Activated T-helper 1 cell treated with anti-CD3 and anti-CD28 coated beads, Interleukin-12 subunit alpha, Interleukin-12 subunit beta, Interleukin-2, Interleukin-4 antibody, amounts not matched to agents 30 ng/mL and 10 ng/mL and 1 ng/mL, durations not matched to agents 14 hours and 24 hours and 36 hours (primary cell): ENCODE measurements at regions of chr1 and their contacts with region 1.

Region 1: GRCh38 chr1:225999227-225999911 is at the start of gene SDE2:
- DNase-seq: peak; percentile 99
- H3K4me3 Mint-ChIP-seq: peak within 1 kb of the TSS; percentile 100
- H3K27ac Mint-ChIP-seq: peak within 1 kb of the TSS; percentile 100
- H3K4me1 Mint-ChIP-seq: peaks cover 76% of the 10 kb centered on the region
- H3K27me3 Mint-ChIP-seq: no peaks in the 10 kb centered on the region
- total RNA-seq, gene SDE2: 28.2 and 28.4 TPM in 2 replicates

Region 2: GRCh38 chr1:225428068-225428880 is 571.1 kb before region 1 on chr1:
- intact Hi-C with region 1: loop called (anchors 1 kb)
- DNase-seq: peak; percentile 94
- H3K4me3 Mint-ChIP-seq: peak overlapping the region; percentile 83
- H3K27ac Mint-ChIP-seq: peak overlapping the region; percentile 90
- H3K4me1 Mint-ChIP-seq: peaks cover 56% of the 10 kb centered on the region
- H3K27me3 Mint-ChIP-seq: no peaks in the 10 kb centered on the region

Region 3: DNA sequence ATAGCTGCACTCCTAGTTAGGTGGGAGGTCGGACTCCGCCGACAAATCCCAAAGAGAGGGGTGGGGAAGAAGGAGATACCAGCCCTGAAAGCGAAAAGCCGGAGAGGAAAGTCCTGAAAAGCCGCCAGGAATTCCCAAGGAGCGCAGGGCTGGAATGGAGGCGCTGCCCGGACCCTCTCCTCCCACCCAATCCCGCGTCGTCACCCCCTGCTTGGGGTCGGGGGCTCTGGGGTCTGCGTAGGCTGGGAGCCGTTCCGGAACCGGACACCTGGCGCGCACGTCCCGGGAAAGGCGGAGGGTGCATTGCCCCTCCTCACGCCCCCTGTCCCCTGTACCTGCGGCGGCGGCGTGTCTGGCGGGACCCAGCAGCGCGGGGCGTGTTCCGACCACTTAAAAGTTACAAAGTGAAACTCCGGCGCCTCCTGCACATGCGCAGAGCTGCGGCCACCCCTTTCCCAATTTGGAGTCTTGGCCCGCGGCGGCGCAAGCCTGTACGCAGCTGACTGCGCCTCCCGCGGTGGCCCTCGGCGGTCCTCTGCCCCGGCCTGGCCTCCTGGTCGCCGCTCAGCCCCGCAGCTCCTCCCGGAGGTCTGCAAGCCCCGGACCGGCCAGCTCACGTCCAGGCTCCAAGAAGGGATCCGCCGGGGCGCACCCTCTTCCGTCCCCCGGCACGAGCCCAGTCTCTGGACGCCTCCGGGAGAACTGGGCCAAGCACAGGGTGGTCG is 117.2 kb before region 1 on chr1 and contains the start of gene TMEM63A:
- intact Hi-C with region 1: loop called (anchors 2 kb)
- DNase-seq: peak; percentile 82
- H3K4me3 Mint-ChIP-seq: peak within 1 kb of the TSS; percentile 86
- H3K27ac Mint-ChIP-seq: peak within 1 kb of the TSS; percentile 77
- H3K4me1 Mint-ChIP-seq: peaks cover 52% of the 10 kb centered on the region
- H3K27me3 Mint-ChIP-seq: peaks cover 19% of the 10 kb centered on the region
- total RNA-seq, gene TMEM63A: 20.4 and 23.4 TPM in 2 replicates

Region 4: GRCh38 chr1:226121587-226122400 is 122.4 kb after region 1 on chr1:
- intact Hi-C with region 1: loop called (anchors 1 kb)
- DNase-seq: peak; percentile 70
- H3K4me3 Mint-ChIP-seq: peak overlapping the region; percentile 78
- H3K27ac Mint-ChIP-seq: no peak overlapping the region
- H3K4me1 Mint-ChIP-seq: peaks cover 41% of the 10 kb centered on the region
- H3K27me3 Mint-ChIP-seq: peaks cover 5% of the 10 kb centered on the region

Region 5: DNA sequence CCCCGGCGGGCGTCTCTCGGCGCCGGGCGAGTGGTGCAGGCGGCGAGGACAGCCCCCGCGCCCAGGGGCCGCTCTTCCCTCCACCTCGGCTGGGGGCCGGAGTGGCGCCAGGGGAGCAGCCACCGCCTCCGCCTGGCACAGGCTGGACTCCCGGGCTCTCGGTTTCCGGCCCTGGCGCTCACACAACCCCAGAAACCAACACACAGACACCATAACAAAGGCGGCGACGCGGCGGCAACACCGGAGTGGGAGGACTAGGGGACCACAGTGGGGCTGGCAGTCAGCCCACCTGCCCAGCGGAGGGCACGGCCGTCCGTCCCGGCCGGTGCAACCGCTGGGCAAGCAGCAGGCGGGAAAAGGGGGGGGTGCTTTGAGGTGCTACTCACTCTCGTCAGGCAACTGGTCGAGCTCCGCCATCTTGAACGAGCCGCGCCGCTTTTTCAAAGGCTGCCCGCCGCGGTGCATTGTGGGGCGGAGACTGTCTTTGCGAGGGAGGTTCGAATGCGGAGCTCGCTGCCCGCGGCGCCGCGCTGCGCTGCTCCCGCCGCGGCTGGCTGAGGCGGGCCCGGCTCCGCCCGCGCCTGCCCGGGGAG is 309.4 kb after region 1 on chr1 and contains the start of gene LIN9:
- intact Hi-C with region 1: loop called (anchors 5 kb)
- DNase-seq: peak; percentile 90
- H3K4me3 Mint-ChIP-seq: peak within 1 kb of the TSS; percentile 95
- H3K27ac Mint-ChIP-seq: peak within 1 kb of the TSS; percentile 86
- H3K4me1 Mint-ChIP-seq: peaks cover 50% of the 10 kb centered on the region
- H3K27me3 Mint-ChIP-seq: peaks cover 16% of the 10 kb centered on the region
- total RNA-seq, gene LIN9: 11.7 and 12.1 TPM in 2 replicates